ENCODE measurements at regions of chr1 and their contacts with region 1.

Region 1: DNA sequence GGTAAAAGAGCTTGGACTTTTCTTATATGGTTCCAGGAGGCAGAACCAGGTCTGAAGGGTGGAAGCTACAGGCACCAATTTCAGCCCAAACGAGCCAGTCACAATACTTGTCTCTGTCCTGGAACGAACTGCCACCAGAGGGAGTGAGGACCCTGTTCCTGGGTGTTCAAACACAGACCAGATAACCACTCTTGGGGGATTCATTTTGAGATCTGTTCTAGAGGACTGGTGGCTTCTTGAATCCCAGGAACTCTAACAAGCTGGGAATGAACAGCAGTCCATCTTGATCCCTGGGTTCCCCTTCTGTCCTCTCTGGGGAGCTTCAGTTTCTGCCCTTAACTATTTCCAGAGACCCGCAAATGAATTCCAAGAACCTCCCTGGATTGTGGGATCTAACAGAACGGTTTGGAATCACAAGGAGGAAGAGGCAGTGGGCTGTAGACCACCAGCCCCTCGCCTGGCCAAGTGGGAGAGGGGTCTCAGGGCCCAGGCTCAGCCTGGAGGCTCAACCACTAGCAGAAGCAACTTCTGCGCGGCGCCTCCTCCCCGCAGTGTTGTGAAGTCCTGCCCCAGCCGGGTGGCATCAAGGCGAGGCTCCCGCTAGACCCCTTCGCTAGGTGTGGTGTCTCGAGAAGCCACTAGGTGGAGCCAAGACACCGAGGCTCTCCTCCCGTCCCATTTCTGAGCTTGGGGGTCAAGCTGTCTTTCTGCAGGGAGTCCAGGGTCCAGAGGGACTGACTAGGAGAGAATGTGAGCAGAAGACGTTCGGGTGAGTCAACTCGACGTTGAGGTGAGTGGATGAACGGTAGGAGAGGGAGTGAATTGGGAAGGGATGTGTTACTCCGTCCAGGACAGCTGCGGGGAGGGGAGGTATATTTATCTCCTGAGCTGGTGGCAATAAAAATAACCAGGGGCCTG is 12.1 kb upstream of the NES start:
- DNase-seq: peak; percentile 66 to 73 (median 66)
- ATAC-seq: peak; percentile 91 to 96 (median 96)
- H3K4me3 ChIP-seq: no peak overlapping the region
- H3K27ac ChIP-seq: no peak overlapping the region
- H3K4me1 ChIP-seq: peaks cover 0 to 7% (median 0%) of the 10 kb centered on the region in 4 donors
- H3K27me3 ChIP-seq: peaks cover 0 to 5% of the 10 kb centered on the region in 2 donors
- CTCF ChIP-seq: peak; percentile 85 to 90 (median 87)
- POLR2A ChIP-seq: no peak

Region 2: GRCh38 chr1:156721535-156721934 is 32.2 kb after region 1 on chr1:
- intact Hi-C with region 1: loop called in 1 of 2 experiments (anchors 5 kb)
- DNase-seq: no peak
- ATAC-seq: no peak
- H3K4me3 ChIP-seq: no peak overlapping the region
- H3K27ac ChIP-seq: no peak overlapping the region
- H3K4me1 ChIP-seq: peaks cover 0 to 18% (median 8%) of the 10 kb centered on the region in 4 donors
- H3K27me3 ChIP-seq: no peaks in the 10 kb centered on the region
- CTCF ChIP-seq: no peak
- POLR2A ChIP-seq: no peak

Measured in right lobe of liver (tissue), 6 donors.